ENCODE measurements at regions of chr2 and their contacts with region 1.

Region 1: DNA sequence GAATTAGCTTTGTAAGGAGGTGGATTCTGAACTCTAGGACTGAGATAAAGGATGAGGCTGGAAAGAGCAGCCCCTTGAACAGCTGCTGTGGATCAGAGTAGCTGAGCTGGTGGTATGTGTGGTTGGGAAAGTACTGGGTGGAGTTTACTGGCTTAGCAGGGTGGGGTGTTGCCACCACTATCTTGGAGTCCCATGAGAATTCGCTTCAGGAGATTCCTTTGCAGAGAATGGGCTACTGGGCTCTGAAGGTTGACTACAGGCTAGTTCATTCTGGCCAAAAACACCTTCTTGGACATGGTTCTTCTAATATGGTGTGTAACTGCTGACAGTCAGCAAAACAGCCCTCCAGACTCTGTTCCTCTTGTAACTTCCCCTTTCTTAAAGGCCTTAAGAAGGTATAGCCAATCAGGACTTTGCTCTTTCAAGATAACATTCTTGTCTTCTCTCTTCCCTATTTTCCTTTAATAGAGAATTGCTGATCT is 52.7 kb downstream of the TET3 start:
- DNase-seq: peak; percentile 82
- ATAC-seq: peak; percentile 83
- H3K4me3 ChIP-seq: peak overlapping the region in 2 of 5 experiments; percentile 8 to 34
- H3K4me3 Mint-ChIP-seq: peak overlapping the region; percentile 82
- H3K27ac ChIP-seq: peak overlapping the region; percentile 73
- H3K27ac Mint-ChIP-seq: peak overlapping the region; percentile 88
- H3K4me1 ChIP-seq: peaks cover 72 to 73% of the 10 kb centered on the region in 2 donors
- H3K4me1 Mint-ChIP-seq: peaks cover 83% of the 10 kb centered on the region
- H3K27me3 ChIP-seq: no peaks in the 10 kb centered on the region
- H3K27me3 Mint-ChIP-seq: no peaks in the 10 kb centered on the region
- CTCF ChIP-seq: no peak

Region 2: DNA sequence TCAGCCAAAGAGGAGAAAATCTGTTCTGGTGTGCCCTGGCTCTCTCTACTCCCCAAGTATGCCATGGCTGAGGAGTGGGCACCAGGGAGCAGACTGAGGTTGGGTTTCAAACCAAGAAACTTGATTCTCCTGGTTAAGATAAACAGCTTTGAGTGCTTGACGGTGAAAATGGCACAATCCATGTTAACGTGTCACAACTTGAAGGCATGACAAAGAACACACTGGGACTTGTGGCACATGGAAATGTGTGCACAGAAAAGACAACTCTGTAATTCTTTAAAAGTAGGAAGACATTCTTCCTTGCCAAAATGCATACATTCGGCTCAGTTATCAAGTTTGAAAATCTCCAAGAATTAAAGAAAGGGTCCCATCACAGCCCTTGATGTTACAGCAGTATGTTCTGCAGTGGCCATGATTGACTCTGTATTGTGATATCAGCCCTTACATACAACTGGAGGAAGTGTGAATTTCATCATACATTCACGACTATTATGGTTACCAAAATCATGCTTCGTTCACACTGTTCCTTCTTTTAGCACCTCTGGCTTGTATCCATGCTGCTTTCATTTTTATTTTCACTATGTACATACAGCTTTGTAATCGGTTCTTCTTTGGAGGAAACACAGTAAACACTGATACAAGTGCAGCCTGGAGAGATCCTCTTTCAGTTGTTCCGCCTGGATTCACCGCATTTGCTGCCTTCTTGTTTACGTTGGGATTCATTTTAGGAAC is 160.2 kb before region 1 on chr2:
- CTCF ChIA-PET with region 1: no interaction called
- POLR2A ChIA-PET with region 1: no interaction called
- intact Hi-C with region 1: no loop called
- DNase-seq: no peak
- ATAC-seq: no peak
- H3K4me3 ChIP-seq: no peak overlapping the region
- H3K4me3 Mint-ChIP-seq: no peak overlapping the region
- H3K27ac ChIP-seq: no peak overlapping the region
- H3K27ac Mint-ChIP-seq: no peak overlapping the region
- H3K4me1 ChIP-seq: no peaks in the 10 kb centered on the region
- H3K4me1 Mint-ChIP-seq: peaks cover 4% of the 10 kb centered on the region
- H3K27me3 ChIP-seq: no peaks in the 10 kb centered on the region
- H3K27me3 Mint-ChIP-seq: peaks cover 10% of the 10 kb centered on the region
- CTCF ChIP-seq: no peak

Region 3: DNA sequence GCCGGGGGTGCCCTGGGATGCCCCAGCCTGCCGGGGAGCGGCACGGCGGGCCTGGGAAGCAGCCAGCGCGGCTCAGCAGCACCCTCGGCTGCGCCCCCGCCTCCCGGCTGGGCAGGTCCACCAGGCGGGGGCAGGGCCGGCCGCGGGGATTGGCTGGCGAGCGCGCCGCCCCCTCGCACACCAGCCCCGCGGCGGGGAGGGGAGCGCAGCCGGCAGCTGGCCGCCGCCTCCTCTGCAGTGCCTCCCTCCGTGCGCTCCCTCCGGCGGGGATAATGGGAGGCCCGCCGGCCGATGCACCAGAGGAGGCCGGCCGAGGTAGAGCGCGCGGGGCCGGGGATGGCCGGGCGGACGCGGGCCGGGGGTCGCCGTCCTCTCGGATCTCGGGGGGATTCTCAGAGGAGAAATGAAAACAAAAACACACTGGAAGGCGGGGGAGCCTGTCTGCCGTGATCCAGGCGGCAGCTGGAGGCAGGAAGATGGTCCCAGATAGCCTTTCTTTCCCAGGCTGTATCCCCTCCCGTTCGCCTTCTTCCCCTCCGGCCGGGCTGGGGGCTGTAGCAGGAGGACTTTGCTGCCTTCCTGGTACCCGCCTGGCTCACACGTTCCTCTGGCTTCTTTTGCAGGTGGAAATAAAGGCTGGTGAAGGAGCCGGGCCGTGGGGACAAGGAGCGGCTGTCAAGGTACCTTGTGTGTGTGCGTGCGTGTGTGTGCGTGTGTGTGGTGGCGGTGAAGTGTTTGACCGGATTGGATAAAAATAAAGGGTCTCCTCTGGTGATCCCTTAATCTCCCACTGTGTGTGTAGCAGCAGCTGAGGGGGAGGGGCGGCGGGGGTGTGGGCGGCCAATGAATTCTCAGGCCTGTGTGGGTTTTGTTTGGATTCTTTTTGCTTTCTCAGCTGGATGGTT is 34.7 kb before region 1 on chr2:
- CTCF ChIA-PET with region 1: interaction called, 4 read pairs
- POLR2A ChIA-PET with region 1: no interaction called
- intact Hi-C with region 1: loop called (anchors 2 kb)
- DNase-seq: peak; percentile 86
- ATAC-seq: peak; percentile 98
- H3K4me3 ChIP-seq: peak overlapping the region in 4 of 5 experiments; percentile 35 to 60 (median 52)
- H3K4me3 Mint-ChIP-seq: peak overlapping the region; percentile 87
- H3K27ac ChIP-seq: no peak overlapping the region
- H3K27ac Mint-ChIP-seq: peak overlapping the region; percentile 53
- H3K4me1 ChIP-seq: peaks cover 15 to 29% of the 10 kb centered on the region in 2 donors
- H3K4me1 Mint-ChIP-seq: peaks cover 66% of the 10 kb centered on the region
- H3K27me3 ChIP-seq: no peaks in the 10 kb centered on the region
- H3K27me3 Mint-ChIP-seq: no peaks in the 10 kb centered on the region
- CTCF ChIP-seq: no peak

Measured in B cell (primary cell).